AG04450 (cell line): ENCODE measurements at regions of chr19 and their contacts with region 1.

Region 1: GRCh38 chr19:16293118-16294091 is 31.2 kb upstream of the KLF2 start:
- DNase-seq: peak; percentile 96
- H3K4me3 ChIP-seq: peak overlapping the region; percentile 54
- H3K27ac ChIP-seq: peak overlapping the region; percentile 99
- H3K27me3 ChIP-seq: peaks cover 12% of the 10 kb centered on the region
- CTCF ChIP-seq: no peak

Region 2: DNA sequence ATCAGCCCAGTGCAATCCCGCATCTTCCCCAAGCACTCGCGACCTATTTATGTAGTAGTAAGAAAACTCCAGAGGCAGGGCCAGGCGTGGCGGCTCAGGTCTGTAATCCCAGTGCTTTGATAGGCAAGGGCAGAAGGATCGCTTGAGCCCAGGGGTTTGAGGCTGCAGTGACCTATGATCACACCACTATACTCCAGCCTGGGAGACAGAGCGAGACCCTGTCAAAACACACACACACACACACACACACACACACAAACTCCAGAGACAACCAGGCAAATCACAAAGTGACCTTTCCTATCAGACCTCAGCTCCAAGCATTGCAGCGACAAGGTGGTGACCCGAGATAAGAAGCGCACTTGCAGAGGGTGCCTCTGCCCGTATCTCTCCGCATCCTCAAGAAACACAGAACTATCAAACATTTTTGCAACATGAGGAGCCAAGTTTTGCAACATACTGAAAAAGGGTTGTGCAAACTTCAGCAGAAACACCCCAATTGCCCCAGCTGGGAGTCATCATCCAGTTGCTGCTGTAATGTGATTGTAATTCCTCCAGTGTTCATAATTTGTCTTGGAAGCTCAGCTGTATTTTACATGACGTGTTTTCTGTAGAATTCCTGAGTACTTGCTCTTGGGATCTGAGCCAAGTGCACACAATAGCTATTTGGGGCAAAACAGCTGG is 22.6 kb after region 1 on chr19:
- CTCF ChIA-PET with region 1: no interaction called
- POLR2A ChIA-PET with region 1: interaction called, 35 read pairs
- DNase-seq: peak; percentile 98
- H3K4me3 ChIP-seq: peak overlapping the region; percentile 45
- H3K27ac ChIP-seq: peak overlapping the region; percentile 96
- H3K27me3 ChIP-seq: no peaks in the 10 kb centered on the region
- CTCF ChIP-seq: no peak